HCT116 (cell line): ENCODE measurements at regions of chr6 and their contacts with region 1.

Region 1: DNA sequence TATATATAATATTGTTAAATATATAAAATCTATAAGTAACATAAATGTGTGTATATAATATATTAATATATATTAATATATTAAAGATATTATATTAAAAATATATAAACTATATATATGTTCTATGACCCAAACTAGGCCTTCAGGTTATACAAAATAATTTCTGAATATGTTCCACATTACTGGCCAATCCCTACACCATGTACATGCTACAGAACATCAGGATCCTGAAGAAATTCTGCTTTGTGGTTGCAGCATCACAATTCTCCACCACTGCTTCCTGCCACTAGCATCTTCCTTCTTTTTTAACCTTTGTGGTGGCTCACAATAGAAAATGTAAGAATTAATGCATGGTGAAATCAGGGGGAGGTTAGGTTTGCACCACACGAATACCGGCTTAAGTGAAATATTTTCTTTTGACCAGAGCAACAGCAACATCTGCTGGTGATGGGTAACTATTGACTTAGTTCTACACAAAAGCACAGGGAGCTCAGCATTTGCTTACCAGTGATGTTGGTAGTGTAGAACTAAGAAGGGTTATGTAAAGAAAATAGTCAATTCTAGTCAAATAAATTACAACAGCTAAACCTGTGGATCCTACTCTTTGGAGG is 280.6 kb downstream of the SYNE1 start:
- DNase-seq: peak; percentile 27
- ATAC-seq: peak; percentile 85
- H3K4me3 ChIP-seq: no peak overlapping the region
- H3K27ac ChIP-seq: no peak overlapping the region
- H3K4me1 ChIP-seq: no peaks in the 10 kb centered on the region
- H3K27me3 ChIP-seq: no peaks in the 10 kb centered on the region
- CTCF ChIP-seq: peak; percentile 23 to 51 (median 24); a peak in 3 of 6 replicates
- POLR2A ChIP-seq: no peak
- RAD21 ChIP-seq: peak; percentile 69

Region 2: GRCh38 chr6:152206072-152206818 is 150.3 kb before region 1 on chr6:
- CTCF ChIA-PET with region 1: no interaction called
- POLR2A ChIA-PET with region 1: no interaction called
- RAD21 ChIA-PET with region 1: no interaction called
- intact Hi-C with region 1: loop called (anchors 2 kb)
- DNase-seq: peak; percentile 13
- ATAC-seq: peak; percentile 78
- H3K4me3 ChIP-seq: no peak overlapping the region
- H3K27ac ChIP-seq: no peak overlapping the region
- H3K4me1 ChIP-seq: no peaks in the 10 kb centered on the region
- H3K27me3 ChIP-seq: no peaks in the 10 kb centered on the region
- CTCF ChIP-seq: peak; percentile 19 to 70 (median 69); a peak in 5 of 6 replicates
- POLR2A ChIP-seq: no peak
- RAD21 ChIP-seq: peak; percentile 22; the same call in 1 of the 2 replicates